ENCODE measurements at regions of chr12 and their contacts with region 1.

Region 1: DNA sequence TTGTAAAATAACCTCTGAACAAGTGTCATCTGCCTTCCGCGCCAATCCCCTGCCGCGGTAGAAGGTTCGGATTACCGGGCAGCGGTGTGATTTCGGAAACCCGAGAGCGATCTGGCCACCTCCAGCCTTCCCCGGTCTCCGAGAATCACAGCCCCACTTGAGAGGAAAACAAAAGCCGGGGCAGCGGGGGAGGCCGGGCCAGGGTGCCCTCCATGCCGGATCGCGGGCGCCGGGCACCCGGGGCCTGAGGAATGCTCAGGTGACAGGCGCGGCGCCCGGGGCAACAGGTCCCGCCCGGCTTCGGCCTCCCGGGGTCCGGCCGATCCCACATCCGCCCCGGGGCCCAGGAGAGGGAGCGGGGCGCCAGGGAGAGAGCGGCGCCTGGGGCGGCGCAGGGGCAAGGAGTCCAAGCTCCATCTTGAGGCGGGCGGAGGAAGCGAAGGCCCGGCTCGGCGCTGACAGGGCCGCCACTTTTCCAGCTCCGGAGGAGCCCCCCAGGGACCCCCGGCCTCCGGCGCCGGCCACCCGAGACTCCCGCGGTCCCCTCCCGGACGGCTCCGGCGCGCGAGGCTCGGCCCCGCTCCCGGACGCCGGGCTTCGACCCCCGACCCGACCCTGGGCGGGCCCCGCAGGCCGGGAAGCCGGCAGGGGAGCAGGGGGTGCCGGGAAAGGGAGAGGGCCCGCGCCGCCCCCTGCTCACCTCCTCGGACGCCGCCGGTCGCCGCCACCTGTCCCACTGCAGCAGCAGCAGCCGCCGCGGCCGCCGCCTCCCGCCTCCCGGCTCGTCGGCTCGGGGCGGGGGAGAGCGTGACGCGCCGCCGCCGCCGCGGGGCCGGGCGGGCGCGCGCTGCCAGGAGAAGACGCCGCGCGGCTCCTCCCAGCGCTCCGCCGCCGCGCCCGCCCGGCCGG is at the start of gene CLIP1:
- DNase-seq: peak; percentile 60 to 83
- ATAC-seq: peak; percentile 68 to 71
- H3K4me3 ChIP-seq: peak within 1 kb of the TSS; percentile 72 to 92 (median 80)
- H3K27ac ChIP-seq: peak within 1 kb of the TSS; percentile 96 to 100 (median 98)
- H3K4me1 ChIP-seq: peaks cover 32 to 42% of the 10 kb centered on the region in 2 donors
- H3K27me3 ChIP-seq: no peaks in the 10 kb centered on the region
- CTCF ChIP-seq: peak in 4 of 5 experiments; percentile 50 to 60 (median 56)
- POLR2A ChIP-seq: peak; percentile 90 to 92
- total RNA-seq, gene CLIP1: 371 to 626 (median 552) TPM

Region 2: DNA sequence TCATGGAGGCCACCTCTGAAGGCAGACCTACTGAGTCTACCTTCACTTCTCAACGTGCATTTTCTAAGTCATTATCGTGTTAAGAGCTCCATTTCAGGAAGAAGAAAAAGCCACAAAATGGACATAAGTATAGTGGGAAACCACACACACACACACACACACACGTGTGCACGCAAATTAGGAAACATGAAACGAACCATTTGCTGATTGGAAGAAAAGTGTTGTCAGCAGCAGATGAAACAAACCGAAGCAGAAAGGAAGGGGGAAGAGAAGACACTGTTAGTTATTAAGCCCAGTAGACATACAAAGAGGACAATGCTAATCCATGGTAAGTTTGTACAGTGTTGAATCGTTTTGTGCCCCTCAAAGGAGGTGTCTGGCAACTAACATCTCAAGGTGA is 145.8 kb before region 1 on chr12:
- in situ Hi-C with region 1: no loop called
- intact Hi-C with region 1: no loop called
- DNase-seq: no peak
- ATAC-seq: no peak
- H3K4me3 ChIP-seq: no peak overlapping the region
- H3K27ac ChIP-seq: no peak overlapping the region
- H3K4me1 ChIP-seq: no peaks in the 10 kb centered on the region
- H3K27me3 ChIP-seq: no peaks in the 10 kb centered on the region
- CTCF ChIP-seq: no peak
- POLR2A ChIP-seq: no peak

Region 3: GRCh38 chr12:122336015-122336946 is 85.8 kb before region 1 on chr12:
- in situ Hi-C with region 1: no loop called
- intact Hi-C with region 1: loop called (anchors 5 kb)
- DNase-seq: no peak
- ATAC-seq: peak in 1 of 2 donors; percentile 22
- H3K4me3 ChIP-seq: no peak overlapping the region
- H3K27ac ChIP-seq: peak overlapping the region; percentile 12 to 65 (median 57)
- H3K4me1 ChIP-seq: no peaks in the 10 kb centered on the region
- H3K27me3 ChIP-seq: no peaks in the 10 kb centered on the region
- CTCF ChIP-seq: peak; percentile 44 to 66 (median 56)
- POLR2A ChIP-seq: no peak

Region 4: DNA sequence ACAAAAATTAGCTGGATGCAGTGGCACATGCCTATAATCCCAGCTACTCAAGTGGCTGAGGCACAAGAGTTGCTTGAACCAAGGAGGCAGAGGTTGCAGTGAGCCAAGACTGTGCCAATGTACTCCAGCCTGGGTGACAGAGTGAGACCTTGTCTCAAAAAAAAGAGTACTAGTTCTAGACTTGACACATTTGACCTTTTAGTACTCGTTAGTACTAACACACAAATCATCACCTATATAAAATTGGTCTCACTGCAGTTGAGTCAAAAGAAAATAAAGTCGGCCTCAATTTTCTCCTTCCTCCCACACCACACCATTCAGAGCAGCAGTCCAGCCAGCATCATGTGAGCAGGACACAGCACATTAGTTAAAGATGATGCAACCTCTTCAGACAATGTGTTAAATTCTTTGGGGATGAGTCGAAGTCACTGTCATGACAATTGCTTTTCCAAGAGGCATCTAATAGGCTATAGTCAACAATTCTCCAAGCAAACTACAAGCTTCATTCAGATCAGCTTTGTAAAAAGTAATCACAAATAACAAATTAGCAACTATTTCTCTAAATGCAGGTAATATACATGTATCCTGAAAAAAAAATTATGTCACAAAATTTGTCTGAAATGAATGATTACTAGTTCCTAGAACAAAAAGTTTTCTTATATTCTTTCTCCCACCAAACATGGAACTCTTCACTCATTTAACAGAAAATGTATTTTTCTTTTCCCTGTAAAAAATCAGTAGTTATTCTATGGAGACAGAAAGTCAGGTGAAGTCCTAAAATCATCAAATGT is 55.2 kb before region 1 on chr12:
- in situ Hi-C with region 1: loop called in 1 of 4 experiments (anchors 10 kb)
- intact Hi-C with region 1: loop called (anchors 5 kb)
- DNase-seq: peak; percentile 79 to 85
- ATAC-seq: peak; percentile 83 to 94
- H3K4me3 ChIP-seq: no peak overlapping the region
- H3K27ac ChIP-seq: peak overlapping the region; percentile 88 to 99 (median 96)
- H3K4me1 ChIP-seq: peaks cover 79 to 90% of the 10 kb centered on the region in 2 donors
- H3K27me3 ChIP-seq: no peaks in the 10 kb centered on the region
- CTCF ChIP-seq: no peak
- POLR2A ChIP-seq: peak in 1 of 2 donors; percentile 42

Region 5: GRCh38 chr12:122399592-122400373 is 22.3 kb before region 1 on chr12:
- in situ Hi-C with region 1: no loop called
- intact Hi-C with region 1: loop called (anchors 1 kb)
- DNase-seq: peak; percentile 94 to 97
- ATAC-seq: peak; percentile 80 to 83
- H3K4me3 ChIP-seq: peak overlapping the region; percentile 46 to 59 (median 50)
- H3K27ac ChIP-seq: peak overlapping the region; percentile 88 to 96 (median 93)
- H3K4me1 ChIP-seq: peaks cover 35 to 75% of the 10 kb centered on the region in 2 donors
- H3K27me3 ChIP-seq: no peaks in the 10 kb centered on the region
- CTCF ChIP-seq: peak in 4 of 5 experiments; percentile 67 to 80 (median 74)
- POLR2A ChIP-seq: peak in 1 of 2 donors; percentile 59

Region 6: GRCh38 chr12:122459211-122459610 is 37.1 kb after region 1 on chr12:
- in situ Hi-C with region 1: no loop called
- intact Hi-C with region 1: no loop called
- DNase-seq: no peak
- ATAC-seq: no peak
- H3K4me3 ChIP-seq: no peak overlapping the region
- H3K27ac ChIP-seq: no peak overlapping the region
- H3K4me1 ChIP-seq: peaks cover 0 to 3% of the 10 kb centered on the region in 2 donors
- H3K27me3 ChIP-seq: no peaks in the 10 kb centered on the region
- CTCF ChIP-seq: no peak
- POLR2A ChIP-seq: no peak

Region 7: GRCh38 chr12:122471324-122472226 is 49.5 kb after region 1 on chr12:
- in situ Hi-C with region 1: no loop called
- intact Hi-C with region 1: loop called (anchors 2 kb)
- DNase-seq: no peak
- ATAC-seq: peak; percentile 52 to 53
- H3K4me3 ChIP-seq: no peak overlapping the region
- H3K27ac ChIP-seq: peak overlapping the region; percentile 53 to 73 (median 64)
- H3K4me1 ChIP-seq: peaks cover 5 to 7% of the 10 kb centered on the region in 2 donors
- H3K27me3 ChIP-seq: no peaks in the 10 kb centered on the region
- CTCF ChIP-seq: peak; percentile 72 to 93 (median 76)
- POLR2A ChIP-seq: no peak